ENCODE measurements at regions of chr6 and their contacts with region 1.

Region 1: GRCh38 chr6:17706580-17707370 is at the start of gene NUP153:
- DNase-seq: peak; percentile 98 to 100
- H3K4me3 ChIP-seq: peak within 1 kb of the TSS; percentile 64 to 84
- H3K27ac ChIP-seq: peak within 1 kb of the TSS; percentile 92 to 97
- H3K4me1 ChIP-seq: peaks cover 8 to 14% of the 10 kb centered on the region in 2 donors
- H3K27me3 ChIP-seq: no peaks in the 10 kb centered on the region
- CTCF ChIP-seq: peak in 2 of 4 experiments; percentile 14 to 16
- POLR2A ChIP-seq: peak; percentile 87 to 97
- total RNA-seq, gene NUP153: 14.1 to 55.1 (median 48.4) TPM

Region 2: DNA sequence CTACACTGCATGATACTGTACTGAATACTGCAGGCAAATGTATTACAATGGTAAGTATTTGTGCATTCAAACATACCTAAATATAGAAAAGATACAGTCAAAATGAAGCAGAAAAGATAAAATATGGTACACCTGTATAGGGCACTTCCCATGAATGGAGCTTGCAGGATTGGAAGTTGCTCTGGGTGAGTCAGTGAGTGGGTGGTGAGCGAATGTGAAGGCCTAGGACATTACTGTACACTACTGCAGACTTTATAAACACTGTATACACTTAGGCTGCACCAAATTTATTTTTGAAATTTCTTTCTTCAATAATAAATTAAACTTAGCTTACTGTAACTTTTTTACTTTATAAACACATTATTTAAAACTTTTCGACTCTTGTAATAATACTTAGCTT is 1158.7 kb before region 1 on chr6:
- intact Hi-C with region 1: no loop called
- DNase-seq: no peak
- H3K4me3 ChIP-seq: no peak overlapping the region
- H3K27ac ChIP-seq: no peak overlapping the region
- H3K4me1 ChIP-seq: no peaks in the 10 kb centered on the region
- H3K27me3 ChIP-seq: no peaks in the 10 kb centered on the region
- CTCF ChIP-seq: no peak
- POLR2A ChIP-seq: no peak

Region 3: DNA sequence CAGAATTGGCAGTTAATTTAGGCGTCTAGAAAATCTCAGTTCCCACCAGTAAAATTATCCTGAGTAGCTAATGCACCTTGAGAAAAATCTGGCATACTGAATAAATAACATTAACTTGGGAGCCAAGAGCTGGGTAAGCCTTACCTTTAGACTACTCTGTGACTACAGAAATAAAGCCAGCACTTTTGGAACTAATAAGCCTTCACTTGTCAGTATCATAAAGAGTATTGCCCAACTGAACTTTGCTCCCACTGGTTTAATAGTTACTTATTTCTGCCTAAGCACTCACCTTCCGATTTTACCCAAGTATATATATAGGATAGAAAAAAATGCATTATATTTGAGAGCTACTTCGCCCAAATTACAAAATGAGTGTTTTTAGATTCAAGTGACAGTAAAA is 95.9 kb before region 1 on chr6:
- intact Hi-C with region 1: loop called (anchors 10 kb)
- DNase-seq: no peak
- H3K4me3 ChIP-seq: no peak overlapping the region
- H3K27ac ChIP-seq: no peak overlapping the region
- H3K4me1 ChIP-seq: no peaks in the 10 kb centered on the region
- H3K27me3 ChIP-seq: no peaks in the 10 kb centered on the region
- CTCF ChIP-seq: no peak
- POLR2A ChIP-seq: no peak